A549 (cell line): ENCODE measurements at regions of chr1 and their contacts with region 1.

Region 1: DNA sequence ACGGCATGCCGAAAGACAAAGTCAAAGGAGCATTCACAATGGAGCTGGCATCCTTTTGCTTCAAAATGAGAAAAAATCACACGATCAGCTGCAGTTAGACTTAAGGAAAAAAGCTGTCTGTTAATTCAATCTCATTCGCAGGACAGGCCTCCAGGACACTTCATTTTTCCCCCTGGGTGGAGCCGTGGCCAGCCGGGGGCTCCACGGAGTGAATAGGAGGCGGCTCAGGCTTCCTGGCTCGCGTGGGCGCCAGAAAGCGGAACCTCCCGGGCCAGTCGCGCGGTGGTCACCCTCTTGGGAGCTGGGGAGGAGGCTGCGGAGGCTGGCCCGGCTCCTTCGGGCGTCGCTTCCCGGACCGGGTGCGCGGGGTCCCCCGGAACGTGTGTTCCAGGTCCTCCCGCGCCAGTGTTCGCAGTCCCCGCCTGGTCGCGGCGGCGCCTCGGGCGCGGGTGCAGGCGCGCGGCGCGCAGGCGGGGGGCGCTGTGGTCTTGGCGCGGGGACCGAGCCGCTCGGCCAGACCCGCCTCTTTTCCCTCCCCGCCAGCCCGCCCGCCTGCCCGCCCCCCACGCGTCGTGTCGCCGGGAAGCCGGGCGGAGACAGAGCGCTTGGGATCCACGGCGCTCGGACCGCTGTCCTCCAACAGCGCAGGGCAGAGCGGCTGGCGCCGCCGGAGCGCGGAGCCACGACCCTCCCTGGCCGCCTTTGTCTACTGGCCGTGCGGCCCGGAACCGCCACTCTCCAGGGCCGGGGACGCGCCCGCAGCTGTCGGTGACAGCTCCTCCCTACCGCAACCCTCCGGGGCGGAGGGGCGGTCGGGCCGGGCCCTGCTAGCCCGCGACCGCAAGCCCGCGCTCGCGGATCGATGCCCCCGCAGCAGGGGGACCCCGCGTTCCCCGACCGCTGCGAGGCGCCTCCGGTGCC is at the start of gene RHOU:
- DNase-seq: peak; percentile 67 to 68
- ATAC-seq: peak; percentile 95
- H3K4me3 ChIP-seq: peak within 1 kb of the TSS; percentile 88
- H3K27ac ChIP-seq: peak within 1 kb of the TSS; percentile 93 to 95
- H3K4me1 ChIP-seq: peaks cover 18% of the 10 kb centered on the region; the same call in 2 of the 3 replicates
- CTCF ChIP-seq: peak; percentile 96
- EP300 ChIP-seq: no peak
- POLR2A ChIP-seq: peak; percentile 37; the same call in 1 of the 2 replicates
- RAD21 ChIP-seq: peak; percentile 56 to 98
- polyA plus RNA-seq, gene RHOU: 11.5 and 12.8 TPM in 2 replicates

Region 2: DNA sequence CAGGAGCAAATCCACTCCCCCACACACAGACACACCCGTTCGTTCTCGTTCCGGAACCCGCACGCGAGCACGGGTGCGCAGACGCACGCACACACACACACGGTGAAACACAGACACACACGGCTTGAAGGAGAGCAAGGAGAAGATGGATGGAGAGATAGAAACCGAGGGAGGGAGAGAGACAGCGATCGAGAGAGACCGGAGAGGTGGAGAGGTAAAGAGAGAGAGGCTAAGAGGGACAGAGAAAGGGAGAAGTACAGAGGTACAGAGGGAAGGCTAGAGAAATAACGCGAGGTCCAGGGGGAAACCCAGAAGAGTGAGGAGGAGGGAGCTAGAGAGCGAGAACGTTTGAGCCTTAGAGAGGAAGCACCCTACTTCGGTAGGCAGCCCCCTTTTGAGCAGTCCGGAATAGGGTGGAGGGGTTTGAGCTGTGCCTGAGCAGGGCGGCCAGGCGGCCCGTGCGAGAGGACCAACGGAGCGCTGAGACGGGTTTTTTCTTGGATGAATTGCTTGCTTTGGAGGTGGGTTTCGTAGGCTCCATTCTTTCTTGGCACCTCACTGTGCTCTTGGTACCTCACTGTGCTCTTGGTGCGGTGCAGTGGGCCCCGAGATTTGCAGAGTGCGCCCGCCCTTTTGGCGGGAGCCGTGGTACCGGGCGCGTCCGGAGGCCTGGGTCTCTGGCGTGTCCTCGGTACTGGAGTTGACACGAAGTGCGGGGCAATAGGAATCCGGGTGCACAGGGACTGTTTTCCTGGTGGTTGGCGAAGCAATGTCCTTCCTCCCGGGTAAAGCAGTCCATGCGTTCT is 88.2 kb before region 1 on chr1:
- CTCF ChIA-PET with region 1: no interaction called
- POLR2A ChIA-PET with region 1: no interaction called
- DNase-seq: peak; percentile 31 to 83
- ATAC-seq: peak; percentile 82
- H3K4me3 ChIP-seq: peak overlapping the region; percentile 57
- H3K27ac ChIP-seq: peak overlapping the region; percentile 81 to 87
- H3K4me1 ChIP-seq: peaks cover 14% of the 10 kb centered on the region
- CTCF ChIP-seq: no peak
- EP300 ChIP-seq: no peak
- POLR2A ChIP-seq: peak; percentile 27; the same call in 1 of the 2 replicates
- RAD21 ChIP-seq: no peak

Region 3: DNA sequence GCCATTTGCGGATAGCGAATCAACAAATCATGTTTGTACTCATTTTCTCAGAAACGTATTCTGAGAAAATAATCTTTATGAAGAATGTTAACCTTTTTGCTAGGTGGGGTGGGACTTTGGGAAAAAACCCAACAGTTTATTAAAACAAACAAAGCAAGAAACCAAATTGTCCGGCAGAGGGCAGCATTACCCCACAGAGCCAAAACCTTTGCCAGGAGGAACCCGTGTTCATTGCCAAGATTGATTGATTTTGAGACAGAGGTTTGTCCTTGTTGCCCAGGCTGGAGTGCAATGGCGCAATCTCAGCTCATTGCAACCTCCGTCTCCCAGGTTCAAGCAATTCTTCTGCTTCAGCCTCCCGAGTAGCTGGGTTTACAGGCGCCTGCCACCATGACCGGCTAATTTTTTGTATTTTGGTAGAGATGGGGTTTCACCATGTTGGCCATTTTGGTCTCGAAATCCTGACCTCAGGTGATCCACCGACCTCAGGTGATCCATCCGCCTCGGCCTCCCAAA is 70.7 kb before region 1 on chr1:
- CTCF ChIA-PET with region 1: interaction called, 16 read pairs
- POLR2A ChIA-PET with region 1: no interaction called
- DNase-seq: peak; percentile 75 to 84
- ATAC-seq: peak; percentile 81 to 90
- H3K4me3 ChIP-seq: peak overlapping the region; percentile 39
- H3K27ac ChIP-seq: peak overlapping the region; percentile 48 to 68; a peak in 3 of 6 replicates
- H3K4me1 ChIP-seq: no peaks in the 10 kb centered on the region
- CTCF ChIP-seq: peak; percentile 94
- EP300 ChIP-seq: no peak
- POLR2A ChIP-seq: no peak
- RAD21 ChIP-seq: peak; percentile 96 to 97

Region 4: GRCh38 chr1:228753786-228754360 is 18.7 kb after region 1 on chr1:
- CTCF ChIA-PET with region 1: interaction called, 11 read pairs
- POLR2A ChIA-PET with region 1: no interaction called
- DNase-seq: no peak
- ATAC-seq: no peak
- H3K4me3 ChIP-seq: no peak overlapping the region
- H3K27ac ChIP-seq: no peak overlapping the region
- H3K4me1 ChIP-seq: no peaks in the 10 kb centered on the region
- CTCF ChIP-seq: no peak
- EP300 ChIP-seq: no peak
- POLR2A ChIP-seq: no peak
- RAD21 ChIP-seq: no peak

Region 5: DNA sequence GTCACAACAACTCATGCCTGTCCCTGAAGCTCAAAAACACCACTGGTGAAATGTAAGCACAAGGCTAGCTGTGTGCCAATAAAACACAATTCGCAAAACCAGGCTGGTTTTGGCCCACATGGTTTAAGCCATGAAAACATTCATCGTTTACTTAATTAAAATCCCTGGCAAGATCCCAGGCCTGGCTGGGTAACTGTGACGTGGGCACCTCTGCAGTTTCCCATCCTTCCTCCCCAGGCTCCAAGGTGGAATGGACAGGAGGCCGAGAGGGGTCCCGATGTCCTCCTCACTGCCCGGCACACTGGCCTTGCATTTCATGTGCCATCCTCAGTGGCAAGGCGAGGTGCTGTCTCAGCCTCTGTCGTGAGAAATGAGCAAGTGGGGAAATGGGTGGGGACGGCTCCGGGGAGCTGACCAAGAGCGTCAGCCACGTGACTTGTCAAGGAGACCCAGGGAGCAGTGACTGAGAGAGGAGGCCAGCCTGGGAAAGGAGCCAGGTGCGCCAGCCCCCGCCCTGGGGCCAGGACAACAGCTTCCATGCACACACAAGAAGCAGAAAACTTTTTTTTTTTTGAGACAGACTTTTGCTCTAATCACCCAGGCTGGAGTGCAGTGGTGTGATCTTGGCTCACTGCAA is 382.6 kb after region 1 on chr1:
- CTCF ChIA-PET with region 1: interaction called, 10 read pairs
- POLR2A ChIA-PET with region 1: no interaction called
- DNase-seq: peak in 1 of 2 experiments; percentile 47
- ATAC-seq: peak in 1 of 2 experiments; percentile 31; a peak in 3 of 6 replicates
- H3K4me3 ChIP-seq: no peak overlapping the region
- H3K27ac ChIP-seq: peak overlapping the region; percentile 51 to 74
- H3K4me1 ChIP-seq: peaks cover 40% of the 10 kb centered on the region
- CTCF ChIP-seq: no peak
- EP300 ChIP-seq: no peak
- POLR2A ChIP-seq: no peak
- RAD21 ChIP-seq: no peak

Region 6: GRCh38 chr1:229238674-229239415 is 503.7 kb after region 1 on chr1:
- CTCF ChIA-PET with region 1: interaction called, 13 read pairs
- POLR2A ChIA-PET with region 1: no interaction called
- DNase-seq: no peak
- ATAC-seq: peak; percentile 50 to 63; a peak in 2 of 6 replicates
- H3K4me3 ChIP-seq: no peak overlapping the region
- H3K27ac ChIP-seq: peak overlapping the region; percentile 59 to 77
- H3K4me1 ChIP-seq: peaks cover 11% of the 10 kb centered on the region
- CTCF ChIP-seq: no peak
- EP300 ChIP-seq: no peak
- POLR2A ChIP-seq: no peak
- RAD21 ChIP-seq: no peak